ENCODE measurements at regions of chr7 and their contacts with region 1.

Region 1: DNA sequence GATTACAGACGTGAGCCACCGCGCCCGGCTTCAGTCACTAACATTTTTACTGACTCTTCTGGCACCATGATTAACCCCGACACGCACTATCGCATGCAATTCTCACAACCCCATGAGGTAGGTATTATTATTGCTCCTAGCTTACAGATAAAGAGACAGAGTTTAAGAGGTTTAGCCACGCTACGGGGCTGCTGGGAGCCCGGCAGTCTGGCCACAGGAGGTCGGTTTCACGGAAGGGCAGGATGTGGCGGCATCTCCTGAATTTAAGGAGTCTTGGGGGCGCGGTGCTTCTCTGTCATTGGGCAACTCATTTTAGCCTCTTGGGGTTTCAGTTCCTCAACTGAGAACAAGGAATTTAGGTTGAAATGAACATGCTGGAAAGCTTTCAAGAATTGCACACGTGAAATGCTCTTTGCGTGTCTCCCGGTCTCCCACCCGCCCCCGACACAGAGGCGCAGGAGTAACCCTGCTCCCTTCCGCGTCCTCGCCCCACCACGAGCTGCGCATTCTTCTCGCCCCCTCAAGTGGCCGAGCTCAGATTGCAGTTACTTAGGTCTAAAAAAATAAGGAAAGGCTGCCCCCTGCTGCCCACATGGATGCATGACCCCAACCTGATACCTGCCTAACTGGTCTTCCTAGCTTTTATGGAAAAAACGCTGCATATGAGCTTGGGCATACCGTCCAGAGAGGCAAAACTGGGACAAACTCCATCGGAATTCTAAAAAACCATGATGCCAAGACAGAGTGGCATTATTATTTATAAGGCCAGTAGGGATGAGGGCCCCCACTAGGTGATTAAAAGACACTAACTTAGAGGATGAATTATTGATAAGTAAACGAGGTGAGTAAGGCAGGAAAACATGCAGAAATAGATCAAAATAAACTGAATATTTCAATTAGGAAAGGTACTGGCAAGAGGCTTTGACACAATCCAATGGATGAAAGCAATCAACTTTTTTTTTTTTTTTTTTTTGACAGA is 12.4 kb downstream of the PRSS2 start:
- DNase-seq: peak; percentile 95 to 98 (median 96)
- H3K4me3 ChIP-seq: peak overlapping the region in 6 of 7 experiments; percentile 3 to 69 (median 56)
- H3K27ac ChIP-seq: peak overlapping the region in 1 of 2 experiments; percentile 49
- H3K4me1 ChIP-seq: peaks cover 0 to 22% (median 13%) of the 10 kb centered on the region in 4 experiments
- H3K27me3 ChIP-seq: no peaks in the 10 kb centered on the region

Region 2: DNA sequence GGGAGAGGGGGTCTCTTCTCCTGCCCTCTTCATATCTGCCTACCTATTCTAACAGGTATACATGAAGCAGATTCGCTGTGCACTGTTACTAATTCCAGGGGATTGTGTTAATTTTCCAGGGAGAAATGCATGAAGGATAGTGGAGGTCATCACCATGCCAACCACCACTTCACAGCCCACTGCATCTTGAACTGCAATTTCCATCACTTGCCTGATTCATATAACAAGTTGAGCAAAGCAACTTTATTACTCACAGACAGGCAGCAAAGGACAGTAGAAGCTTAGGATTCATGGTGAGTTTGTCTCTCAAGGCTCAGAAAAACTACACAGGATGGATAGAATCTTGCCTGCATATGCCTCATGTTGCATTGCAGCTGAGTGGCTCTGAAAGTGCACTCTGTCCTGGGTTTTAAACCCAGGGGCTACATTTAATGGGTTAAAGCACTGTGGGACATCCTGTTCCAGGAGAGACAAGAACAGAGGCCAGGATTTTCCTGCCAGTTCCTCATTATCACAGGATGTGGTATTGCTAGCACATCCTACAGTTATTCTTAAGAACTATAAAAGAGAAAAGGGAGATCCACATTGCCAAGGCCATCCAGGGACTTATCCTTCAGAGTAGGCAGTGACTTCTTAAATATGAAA is 170.9 kb before region 1 on chr7:
- CTCF ChIA-PET with region 1: interaction called, 11 read pairs
- POLR2A ChIA-PET with region 1: no interaction called
- DNase-seq: no peak
- H3K4me3 ChIP-seq: no peak overlapping the region
- H3K27ac ChIP-seq: no peak overlapping the region
- H3K4me1 ChIP-seq: peaks cover 2 to 52% (median 39%) of the 10 kb centered on the region in 4 experiments
- H3K27me3 ChIP-seq: no peaks in the 10 kb centered on the region

Region 3: GRCh38 chr7:142646386-142647140 is 136.6 kb before region 1 on chr7:
- CTCF ChIA-PET with region 1: interaction called, 18 read pairs
- POLR2A ChIA-PET with region 1: interaction called, 4 read pairs
- DNase-seq: peak; percentile 69 to 95 (median 90)
- H3K4me3 ChIP-seq: peak overlapping the region in 6 of 7 experiments; percentile 49 to 78 (median 63)
- H3K27ac ChIP-seq: peak overlapping the region; percentile 46 to 84
- H3K4me1 ChIP-seq: peaks cover 9 to 42% (median 23%) of the 10 kb centered on the region in 4 experiments
- H3K27me3 ChIP-seq: no peaks in the 10 kb centered on the region

Region 4: DNA sequence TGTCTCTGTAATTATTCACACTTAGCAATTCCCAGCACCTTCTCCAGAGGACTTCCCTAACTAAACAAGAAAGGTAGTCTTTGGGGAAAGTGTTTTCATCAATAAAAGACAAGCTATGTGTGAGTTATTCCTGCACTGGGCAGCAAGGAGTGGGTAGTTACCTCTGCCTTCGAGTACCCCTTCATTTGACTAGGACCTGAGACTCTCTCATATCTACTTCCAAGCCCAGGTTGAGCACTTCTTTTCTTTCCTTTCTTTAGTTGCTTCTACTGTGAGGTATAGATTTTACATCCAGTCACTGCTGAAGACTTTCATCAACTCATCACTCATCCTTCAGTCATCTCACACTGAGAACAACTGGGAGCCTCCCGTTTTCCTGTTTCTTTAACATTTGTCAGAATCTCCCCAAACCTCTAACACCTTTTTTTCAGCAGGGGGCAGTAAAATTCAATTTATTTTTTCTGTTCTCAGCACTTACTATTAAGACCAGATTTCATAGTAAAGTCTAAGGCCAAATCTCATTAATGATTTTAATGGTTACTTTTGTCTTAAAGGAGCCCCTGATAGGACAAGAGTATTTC is 114.0 kb before region 1 on chr7:
- CTCF ChIA-PET with region 1: interaction called, 76 read pairs
- POLR2A ChIA-PET with region 1: interaction called, 4 read pairs
- DNase-seq: peak; percentile 31 to 50 (median 49)
- H3K4me3 ChIP-seq: no peak overlapping the region
- H3K27ac ChIP-seq: no peak overlapping the region
- H3K4me1 ChIP-seq: peaks cover 17 to 43% (median 34%) of the 10 kb centered on the region in 4 experiments
- H3K27me3 ChIP-seq: no peaks in the 10 kb centered on the region

Region 5: GRCh38 chr7:143069912-143070500 is 286.8 kb after region 1 on chr7:
- CTCF ChIA-PET with region 1: no interaction called
- POLR2A ChIA-PET with region 1: no interaction called
- DNase-seq: no peak
- H3K4me3 ChIP-seq: no peak overlapping the region
- H3K27ac ChIP-seq: no peak overlapping the region
- H3K4me1 ChIP-seq: no peaks in the 10 kb centered on the region
- H3K27me3 ChIP-seq: peaks cover 0 to 2% (median 0%) of the 10 kb centered on the region in 5 experiments

Measured in common myeloid progenitor, CD34-positive (primary cell).